ENCODE measurements at regions of chr5 and their contacts with region 1.

Region 1: DNA sequence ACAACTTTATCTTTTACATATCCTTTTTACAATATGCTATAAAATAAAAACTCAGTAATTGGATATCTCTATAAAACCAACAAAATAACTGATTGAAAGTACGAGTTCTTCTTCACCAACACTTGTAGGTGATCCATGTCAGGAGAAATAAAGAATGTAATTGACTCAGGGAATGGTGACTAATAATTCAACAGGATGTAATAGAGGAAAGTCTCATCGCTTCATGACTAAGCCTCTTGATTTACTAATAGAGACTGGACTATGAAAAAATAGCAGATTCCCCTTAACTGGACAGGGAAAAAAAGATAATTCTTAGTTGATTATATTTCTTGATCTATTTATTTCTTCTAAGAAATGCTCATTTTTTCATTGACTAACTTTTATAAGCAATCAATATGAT is 507.7 kb upstream of the PTGER4 start:
- DNase-seq: no peak
- H3K4me3 ChIP-seq: no peak overlapping the region
- H3K27ac ChIP-seq: no peak overlapping the region
- H3K4me1 ChIP-seq: no peaks in the 10 kb centered on the region
- H3K27me3 ChIP-seq: no peaks in the 10 kb centered on the region
- CTCF ChIP-seq: no peak
- POLR2A ChIP-seq: no peak

Region 2: GRCh38 chr5:39461026-39461682 is 710.8 kb before region 1 on chr5:
- intact Hi-C with region 1: loop called (anchors 5 kb)
- DNase-seq: no peak
- H3K4me3 ChIP-seq: no peak overlapping the region
- H3K27ac ChIP-seq: no peak overlapping the region
- H3K4me1 ChIP-seq: no peaks in the 10 kb centered on the region
- H3K27me3 ChIP-seq: no peaks in the 10 kb centered on the region
- CTCF ChIP-seq: no peak
- POLR2A ChIP-seq: no peak

Region 3: GRCh38 chr5:40904205-40904993 is 732.4 kb after region 1 on chr5:
- intact Hi-C with region 1: loop called (anchors 5 kb)
- DNase-seq: no peak
- H3K4me3 ChIP-seq: no peak overlapping the region
- H3K27ac ChIP-seq: peak overlapping the region in 1 of 2 donors; percentile 83
- H3K4me1 ChIP-seq: no peaks in the 10 kb centered on the region
- H3K27me3 ChIP-seq: no peaks in the 10 kb centered on the region
- CTCF ChIP-seq: peak; percentile 71 to 90 (median 79)
- POLR2A ChIP-seq: no peak

Measured in breast epithelium (tissue), 4 donors.